Activated B cell treated with CpG ODN at 0.5 μM for 24 hours (primary cell): ENCODE measurements at regions of chr2 and their contacts with region 1.

Region 1: GRCh38 chr2:173898178-173898668 is 67.0 kb downstream of the SP3 start:
- DNase-seq: no peak
- ATAC-seq: peak; percentile 90
- H3K4me3 Mint-ChIP-seq: peak overlapping the region; percentile 52
- H3K27ac Mint-ChIP-seq: peak overlapping the region; percentile 51
- H3K4me1 Mint-ChIP-seq: peaks cover 41% of the 10 kb centered on the region
- H3K27me3 Mint-ChIP-seq: no peaks in the 10 kb centered on the region
- CTCF ChIP-seq: no peak

Region 2: GRCh38 chr2:173806766-173807165 is 91.5 kb before region 1 on chr2:
- CTCF ChIA-PET with region 1: no interaction called
- POLR2A ChIA-PET with region 1: no interaction called
- intact Hi-C with region 1: no loop called
- DNase-seq: no peak
- ATAC-seq: no peak
- H3K4me3 Mint-ChIP-seq: no peak overlapping the region
- H3K27ac Mint-ChIP-seq: no peak overlapping the region
- H3K4me1 Mint-ChIP-seq: peaks cover 7% of the 10 kb centered on the region
- H3K27me3 Mint-ChIP-seq: no peaks in the 10 kb centered on the region
- CTCF ChIP-seq: no peak

Region 3: GRCh38 chr2:173874894-173875237 is 23.4 kb before region 1 on chr2:
- CTCF ChIA-PET with region 1: no interaction called
- POLR2A ChIA-PET with region 1: no interaction called
- intact Hi-C with region 1: loop called (anchors 1 kb)
- DNase-seq: peak; percentile 39
- ATAC-seq: peak; percentile 98
- H3K4me3 Mint-ChIP-seq: peak overlapping the region; percentile 52
- H3K27ac Mint-ChIP-seq: peak overlapping the region; percentile 59
- H3K4me1 Mint-ChIP-seq: peaks cover 34% of the 10 kb centered on the region
- H3K27me3 Mint-ChIP-seq: peaks cover 19% of the 10 kb centered on the region
- CTCF ChIP-seq: no peak

Region 4: DNA sequence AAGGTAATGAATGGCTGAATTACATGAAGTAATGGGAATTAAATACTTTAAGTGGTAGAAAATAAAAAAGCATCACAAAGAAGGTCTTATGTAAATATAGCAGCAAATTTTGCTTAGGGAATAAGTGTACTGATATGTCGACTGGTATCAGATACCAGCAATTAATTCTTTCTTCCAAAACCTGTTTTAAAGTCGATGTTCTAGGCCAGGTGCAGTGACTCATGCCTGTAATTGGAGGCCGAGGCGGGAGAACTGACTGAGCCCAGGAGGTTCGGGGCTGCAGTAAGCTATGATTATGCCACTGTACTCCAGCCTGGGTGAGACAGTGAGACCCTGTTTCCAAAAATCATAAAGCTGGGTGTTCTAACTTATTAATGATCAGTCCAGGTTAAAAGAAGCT is 36.7 kb after region 1 on chr2:
- CTCF ChIA-PET with region 1: no interaction called
- POLR2A ChIA-PET with region 1: no interaction called
- intact Hi-C with region 1: loop called (anchors 5 kb)
- DNase-seq: no peak
- ATAC-seq: no peak
- H3K4me3 Mint-ChIP-seq: no peak overlapping the region
- H3K27ac Mint-ChIP-seq: no peak overlapping the region
- H3K4me1 Mint-ChIP-seq: peaks cover 26% of the 10 kb centered on the region
- H3K27me3 Mint-ChIP-seq: no peaks in the 10 kb centered on the region
- CTCF ChIP-seq: no peak